GM12878 (cell line): ENCODE measurements at regions of chr18 and their contacts with region 1.

Region 1: DNA sequence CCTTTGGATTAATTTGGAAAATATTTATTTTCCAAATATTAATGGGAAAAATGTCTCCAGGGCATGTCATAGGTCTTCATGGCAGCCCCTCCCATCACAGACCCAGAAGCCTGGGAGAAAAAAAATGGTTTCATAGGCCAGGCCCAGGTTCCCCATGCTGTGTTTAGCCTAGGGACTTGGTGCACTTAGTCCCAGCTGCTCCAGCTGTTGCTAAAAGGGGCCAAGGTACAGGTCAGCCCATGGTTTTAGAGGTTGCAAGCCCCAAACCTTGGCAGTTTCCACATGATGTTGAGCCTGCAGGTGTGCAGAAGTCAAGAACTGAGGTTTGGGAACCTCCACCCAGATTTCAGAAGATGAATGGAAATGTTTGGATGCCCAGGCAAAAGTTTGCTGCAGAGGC is 309.6 kb downstream of the SOCS6 start:
- DNase-seq: no peak
- ATAC-seq: no peak
- H3K4me3 ChIP-seq: no peak overlapping the region
- H3K27ac ChIP-seq: no peak overlapping the region
- H3K4me1 ChIP-seq: no peaks in the 10 kb centered on the region
- H3K27me3 ChIP-seq: no peaks in the 10 kb centered on the region
- CTCF ChIP-seq: no peak
- EP300 ChIP-seq: no peak
- POLR2A ChIP-seq: no peak
- RAD21 ChIP-seq: no peak

Region 2: DNA sequence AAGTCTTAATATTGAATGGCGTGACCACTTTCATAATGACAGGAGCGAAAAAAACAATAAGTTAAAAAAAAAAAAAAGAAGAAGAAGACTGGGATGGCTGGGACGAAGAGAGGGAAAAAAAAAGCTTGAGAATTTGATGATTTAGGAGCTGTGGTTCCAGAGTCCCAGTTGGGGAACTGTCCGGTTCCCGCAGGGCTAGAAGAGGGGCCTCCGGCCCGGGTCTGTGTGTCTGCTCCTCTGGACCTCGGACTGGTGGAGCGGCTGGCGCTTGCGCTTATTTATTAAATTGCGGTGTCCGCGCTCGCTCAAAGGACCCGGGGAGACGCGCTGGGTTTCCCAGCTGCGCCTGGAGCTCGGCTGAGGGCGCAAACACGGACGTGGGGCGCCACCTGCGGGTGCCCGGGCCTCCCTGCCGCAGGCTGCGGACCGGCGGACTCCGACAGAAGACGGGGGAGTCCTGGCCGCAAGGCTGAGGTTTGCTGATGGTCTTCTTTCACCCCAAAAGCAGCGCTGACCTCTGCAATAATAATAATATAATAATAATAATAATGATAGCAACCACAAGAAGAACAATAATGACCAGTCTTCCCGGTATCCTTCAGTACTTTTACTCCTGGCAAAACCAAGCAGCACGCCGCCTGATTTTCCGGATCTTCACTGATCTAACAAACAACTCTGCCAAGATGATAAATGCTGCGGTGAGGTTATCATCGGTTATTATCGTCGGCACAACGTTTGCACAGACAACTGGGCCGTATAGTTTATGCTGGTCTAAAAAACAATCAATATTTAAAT is 1945.9 kb after region 1 on chr18 and contains the start of gene CBLN2:
- CTCF ChIA-PET with region 1: interaction called, 6 read pairs
- POLR2A ChIA-PET with region 1: no interaction called
- RAD21 ChIA-PET with region 1: interaction called, 4 read pairs
- SMC1A ChIA-PET with region 1: no interaction called
- in situ Hi-C with region 1: no loop called
- intact Hi-C with region 1: loop called (anchors 5 kb)
- DNase-seq: no peak
- ATAC-seq: peak; percentile 97
- H3K4me3 ChIP-seq: no peak within 1 kb of the TSS
- H3K27ac ChIP-seq: no peak within 1 kb of the TSS
- H3K4me1 ChIP-seq: no peaks in the 10 kb centered on the region
- H3K27me3 ChIP-seq: peaks cover 0 to 3% of the 10 kb centered on the region in 2 experiments; a peak in 2 of 4 replicates
- CTCF ChIP-seq: peak; percentile 54 to 80 (median 76)
- EP300 ChIP-seq: no peak
- POLR2A ChIP-seq: no peak
- RAD21 ChIP-seq: peak; percentile 76
- polyA plus RNA-seq, gene CBLN2: 0.11 TPM in 1 of 2 experiments, not detected in the other